ENCODE measurements at regions of chr5 and their contacts with region 1.

Region 1: DNA sequence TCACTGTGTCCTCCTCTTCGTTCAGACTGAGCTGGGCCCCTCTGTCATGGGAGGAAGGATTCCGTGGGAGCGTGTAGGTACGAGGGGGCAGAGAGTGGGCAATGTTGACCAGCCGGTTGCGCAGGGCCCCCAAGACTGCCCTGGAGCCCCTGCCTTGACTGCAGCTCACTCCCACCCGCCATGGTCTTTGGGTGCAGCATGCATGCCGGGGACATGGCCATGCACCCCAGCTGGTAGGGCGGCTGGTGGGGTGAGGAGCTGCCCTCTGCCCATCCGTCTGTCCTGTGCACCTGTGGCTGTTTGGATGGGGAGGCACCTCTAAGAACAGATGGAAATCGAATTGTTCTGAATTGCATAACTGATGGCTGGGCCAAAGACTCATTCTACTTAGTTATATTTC is 42.6 kb upstream of the NPR3 start:
- DNase-seq: no peak
- ATAC-seq: no peak
- H3K4me3 ChIP-seq: no peak overlapping the region
- H3K27ac ChIP-seq: no peak overlapping the region
- H3K4me1 ChIP-seq: no peaks in the 10 kb centered on the region
- H3K27me3 ChIP-seq: peaks cover 0 to 3% (median 0%) of the 10 kb centered on the region in 3 donors
- CTCF ChIP-seq: no peak

Region 2: GRCh38 chr5:32628048-32628803 is 40.3 kb before region 1 on chr5:
- intact Hi-C with region 1: no loop called
- DNase-seq: no peak
- ATAC-seq: peak; percentile 17 to 73 (median 62)
- H3K4me3 ChIP-seq: no peak overlapping the region
- H3K27ac ChIP-seq: no peak overlapping the region
- H3K4me1 ChIP-seq: no peaks in the 10 kb centered on the region
- H3K27me3 ChIP-seq: no peaks in the 10 kb centered on the region
- CTCF ChIP-seq: no peak

Region 3: DNA sequence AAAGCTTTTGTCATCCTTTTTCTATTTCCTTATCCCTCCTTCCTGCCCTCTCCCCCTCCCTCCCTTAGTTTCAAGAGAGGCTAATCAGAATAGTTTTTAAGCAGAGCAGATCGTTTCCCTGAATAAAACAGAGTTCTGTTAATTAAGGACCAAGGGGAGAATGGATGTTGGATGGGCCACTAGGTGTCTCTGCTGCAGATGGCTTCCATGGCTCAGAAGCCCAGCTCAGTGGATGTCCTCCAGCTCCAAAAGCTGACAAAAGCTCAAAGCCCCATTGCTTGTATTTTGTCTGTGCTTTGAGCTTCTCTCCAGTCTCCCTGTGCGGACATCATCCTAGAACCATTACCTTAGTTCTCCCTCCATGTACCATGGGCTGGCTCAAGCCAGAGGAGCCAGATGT is 21.6 kb after region 1 on chr5:
- intact Hi-C with region 1: loop called in 1 of 2 experiments (anchors 1 kb)
- DNase-seq: no peak
- ATAC-seq: no peak
- H3K4me3 ChIP-seq: no peak overlapping the region
- H3K27ac ChIP-seq: no peak overlapping the region
- H3K4me1 ChIP-seq: no peaks in the 10 kb centered on the region
- H3K27me3 ChIP-seq: no peaks in the 10 kb centered on the region
- CTCF ChIP-seq: peak; percentile 7

Measured in psoas muscle (tissue), 8 donors.